Activated T-helper 2 cell treated with anti-CD3 and anti-CD28 coated beads, Interferon-gamma antibody, Interleukin-2, Interleukin-4, amounts not matched to agents 10 μg/mL and 5 μg/mL and 100 μg/mL, durations not matched to agents 14 hours and 24 hours and 36 hours (primary cell): ENCODE measurements at regions of chr2 and their contacts with region 1.

Region 1: DNA sequence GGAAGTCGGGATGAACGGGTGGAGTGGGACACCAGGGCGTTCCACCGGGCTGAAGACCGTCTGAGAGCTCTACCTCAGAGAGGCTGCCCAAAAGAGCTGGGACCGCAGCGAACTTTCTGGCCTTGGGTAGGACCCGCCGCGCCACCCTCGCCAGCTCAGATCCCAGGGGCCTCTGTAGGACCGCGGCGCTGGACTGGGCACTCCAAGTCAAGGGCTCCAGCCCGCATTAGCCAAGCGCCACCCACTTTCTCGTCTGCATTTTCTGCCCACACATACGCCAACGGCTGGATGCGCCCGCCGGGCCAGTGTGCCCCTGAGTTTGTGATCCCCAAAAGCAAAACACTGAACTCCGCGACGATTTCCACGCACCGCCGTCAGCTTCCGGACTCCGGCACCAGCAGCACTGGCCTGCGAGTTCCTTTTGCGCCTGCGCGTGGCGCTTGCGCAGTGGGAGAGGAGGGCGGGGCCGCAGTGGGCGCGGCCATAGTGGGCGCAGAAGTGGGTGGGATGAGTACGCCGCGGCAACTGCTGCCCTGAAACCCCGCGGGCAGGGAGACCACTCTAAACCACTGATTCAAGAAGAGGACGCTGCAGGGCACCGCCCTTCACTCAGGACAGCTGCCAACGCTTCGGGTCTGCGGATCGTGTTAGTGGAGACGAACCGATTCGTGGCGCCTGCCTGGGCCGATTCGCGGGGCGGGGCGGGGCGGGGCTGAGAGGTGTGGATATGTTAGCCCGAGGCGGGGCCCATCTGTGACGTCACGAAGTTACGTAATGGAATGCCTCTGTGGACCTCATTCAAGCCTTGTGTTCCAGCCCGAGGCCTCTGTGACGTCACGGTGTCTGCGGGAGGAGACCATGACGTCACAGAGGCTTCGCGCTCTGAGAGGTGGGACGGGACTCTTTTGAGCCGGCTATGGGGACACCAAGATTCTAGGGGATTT is 10.5 kb downstream of the OSR1 start:
- DNase-seq: peak; percentile 97
- H3K4me3 Mint-ChIP-seq: peak overlapping the region; percentile 96
- H3K27ac Mint-ChIP-seq: peak overlapping the region; percentile 93
- H3K4me1 Mint-ChIP-seq: peaks cover 20% of the 10 kb centered on the region
- H3K27me3 Mint-ChIP-seq: peaks cover 33% of the 10 kb centered on the region

Region 2: GRCh38 chr2:17753803-17754663 is 1593.9 kb before region 1 on chr2 and contains the starts of genes GEN1 and SMC6:
- intact Hi-C with region 1: loop called (anchors 10 kb)
- DNase-seq: peak; percentile 89
- H3K4me3 Mint-ChIP-seq: peak within 1 kb of the TSS; percentile 91
- H3K27ac Mint-ChIP-seq: peak within 1 kb of the TSS; percentile 96
- H3K4me1 Mint-ChIP-seq: peaks cover 50% of the 10 kb centered on the region
- H3K27me3 Mint-ChIP-seq: no peaks in the 10 kb centered on the region
- total RNA-seq, gene GEN1: 26.6 and 29.2 TPM in 2 replicates
- total RNA-seq, gene SMC6: 30.1 and 30.3 TPM in 2 replicates

Region 3: DNA sequence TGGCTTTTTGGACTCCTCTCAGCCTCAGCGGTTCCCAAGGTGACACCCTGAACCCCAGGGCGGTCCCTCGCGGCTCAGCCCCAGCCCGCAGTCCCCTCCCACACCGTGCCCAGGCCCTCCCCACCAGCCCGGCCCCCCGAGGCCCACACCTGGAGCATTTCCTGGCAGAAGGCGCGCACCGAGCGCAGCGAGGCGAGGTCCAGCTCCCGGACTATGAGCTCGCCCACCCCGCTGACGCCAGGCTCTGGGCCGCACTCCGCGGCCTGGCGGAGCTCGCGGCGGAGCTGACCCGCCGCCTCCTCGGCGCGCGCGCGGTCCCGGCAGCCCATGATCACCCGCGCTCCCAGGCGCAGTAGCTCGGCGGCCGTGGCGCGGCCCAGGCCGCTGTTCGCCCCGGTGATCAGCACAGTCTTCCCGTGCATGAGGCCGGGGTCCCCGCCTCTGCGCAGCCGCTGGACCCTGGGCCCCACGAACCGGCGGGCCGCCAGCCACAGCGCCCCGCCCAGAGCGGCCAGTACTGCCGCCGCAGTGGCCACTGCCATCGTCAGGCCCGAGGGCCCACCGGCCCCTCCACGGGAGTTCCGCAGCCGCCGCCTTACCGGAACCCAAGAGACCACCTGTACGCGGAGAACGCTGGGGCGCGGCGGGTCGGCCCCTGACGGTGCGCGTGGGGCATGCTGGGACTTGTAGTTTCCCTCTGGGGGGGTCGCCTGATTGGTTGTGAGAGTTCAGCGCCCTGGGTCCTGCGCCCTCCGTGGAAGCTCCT is 787.7 kb before region 1 on chr2 and contains the start of gene RDH14:
- intact Hi-C with region 1: loop called (anchors 1 kb)
- DNase-seq: peak; percentile 86
- H3K4me3 Mint-ChIP-seq: peak within 1 kb of the TSS; percentile 88
- H3K27ac Mint-ChIP-seq: peak within 1 kb of the TSS; percentile 90
- H3K4me1 Mint-ChIP-seq: peaks cover 31% of the 10 kb centered on the region
- H3K27me3 Mint-ChIP-seq: no peaks in the 10 kb centered on the region
- total RNA-seq, gene RDH14: 12.4 and 15.2 TPM in 2 replicates

Region 4: DNA sequence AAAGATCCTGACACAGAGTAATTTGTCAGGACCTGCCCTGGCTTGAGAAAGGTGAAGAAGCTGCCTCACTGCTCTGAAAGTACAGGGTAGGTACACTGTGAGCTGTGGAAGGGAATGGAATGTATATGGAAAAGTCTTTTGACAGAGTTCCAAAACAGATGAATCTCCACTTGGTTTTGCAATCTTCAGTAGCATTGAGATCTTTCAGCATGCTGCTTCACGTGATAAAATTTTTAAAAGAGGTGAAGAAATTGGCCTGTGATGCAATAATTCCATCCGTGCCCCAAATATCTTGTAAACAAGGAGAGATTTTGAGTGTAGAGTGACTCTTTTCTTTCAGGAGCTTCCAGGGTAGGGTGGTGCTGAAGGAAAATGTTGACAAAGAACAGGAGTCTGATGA is 112.6 kb before region 1 on chr2:
- intact Hi-C with region 1: no loop called
- DNase-seq: no peak
- H3K4me3 Mint-ChIP-seq: no peak overlapping the region
- H3K27ac Mint-ChIP-seq: no peak overlapping the region
- H3K4me1 Mint-ChIP-seq: no peaks in the 10 kb centered on the region
- H3K27me3 Mint-ChIP-seq: no peaks in the 10 kb centered on the region

Region 5: DNA sequence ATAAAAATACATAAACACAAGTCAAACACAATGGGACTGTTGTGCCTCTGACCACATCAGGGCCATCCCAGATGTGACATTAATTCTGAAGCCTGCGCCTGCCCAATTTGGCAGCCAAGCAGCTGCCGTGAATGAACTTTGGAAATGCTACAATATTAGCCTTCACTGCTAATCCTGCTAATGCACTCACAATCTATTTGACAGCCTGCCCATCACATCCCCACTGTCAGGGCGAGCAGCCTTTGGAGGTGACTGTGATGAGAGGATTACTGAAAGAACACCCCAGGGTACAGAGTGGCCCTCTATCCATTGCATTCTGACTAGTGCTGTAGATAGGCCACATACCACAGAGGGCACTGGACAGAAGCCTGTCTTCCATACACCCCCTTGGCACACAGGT is 11.1 kb before region 1 on chr2:
- intact Hi-C with region 1: no loop called
- DNase-seq: no peak
- H3K4me3 Mint-ChIP-seq: no peak overlapping the region
- H3K27ac Mint-ChIP-seq: no peak overlapping the region
- H3K4me1 Mint-ChIP-seq: no peaks in the 10 kb centered on the region
- H3K27me3 Mint-ChIP-seq: no peaks in the 10 kb centered on the region

Region 6: GRCh38 chr2:19868705-19869580 is 521.1 kb after region 1 on chr2:
- intact Hi-C with region 1: loop called (anchors 5 kb)
- DNase-seq: peak; percentile 51
- H3K4me3 Mint-ChIP-seq: peak overlapping the region; percentile 84
- H3K27ac Mint-ChIP-seq: peak overlapping the region; percentile 83
- H3K4me1 Mint-ChIP-seq: peaks cover 22% of the 10 kb centered on the region
- H3K27me3 Mint-ChIP-seq: no peaks in the 10 kb centered on the region

Region 7: DNA sequence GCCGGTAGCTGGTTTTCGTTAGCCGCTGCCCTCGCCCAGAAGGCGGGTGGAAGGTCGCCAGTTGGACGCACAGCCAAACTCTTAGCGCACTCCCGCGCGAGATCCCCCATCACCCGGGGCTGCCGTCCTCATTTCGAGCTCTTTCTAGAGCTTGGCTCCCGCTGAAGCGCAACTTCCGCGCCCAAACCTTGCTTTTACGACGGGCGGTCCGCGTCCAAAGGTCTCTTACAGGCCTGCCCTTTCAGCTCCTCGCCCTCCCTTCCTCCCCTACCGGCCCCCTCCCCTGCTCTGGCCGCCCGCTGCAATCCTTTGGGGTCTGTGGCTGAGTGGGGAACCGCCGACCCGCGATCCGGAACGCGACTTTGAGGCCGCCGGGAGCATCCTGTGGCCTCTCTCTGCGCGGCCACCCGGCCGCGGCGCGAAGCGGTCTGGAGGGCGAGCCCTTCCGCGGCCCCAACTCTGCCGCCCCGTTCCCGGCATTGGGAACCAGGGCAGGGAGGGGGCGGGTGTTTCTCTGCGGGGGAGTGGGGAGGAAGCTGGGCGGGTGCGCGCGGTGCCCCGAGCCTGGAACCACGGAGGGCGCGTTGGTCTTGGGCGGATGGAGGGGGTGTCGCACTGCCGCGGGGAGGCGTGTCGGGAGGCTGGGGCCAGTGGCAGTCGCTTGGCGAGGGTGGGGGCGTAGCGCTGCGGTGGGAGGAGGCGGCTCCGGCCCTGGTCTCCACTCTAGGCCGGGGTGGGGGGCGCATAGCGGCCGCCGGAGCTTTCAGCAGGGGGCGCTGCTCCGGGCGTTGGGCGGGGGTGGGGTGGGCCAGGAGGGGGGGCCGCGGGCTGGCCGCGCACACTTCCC is 1318.6 kb after region 1 on chr2 and contains the start of gene GDF7:
- intact Hi-C with region 1: loop called (anchors 5 kb)
- DNase-seq: no peak
- H3K4me3 Mint-ChIP-seq: peak within 1 kb of the TSS; percentile 55
- H3K27ac Mint-ChIP-seq: no peak within 1 kb of the TSS
- H3K4me1 Mint-ChIP-seq: no peaks in the 10 kb centered on the region
- H3K27me3 Mint-ChIP-seq: peaks cover 64% of the 10 kb centered on the region
- total RNA-seq, gene GDF7: 0.05 and 0.11 TPM in 2 replicates